Motor neuron (in vitro differentiated cells): ENCODE measurements at regions of chr13 and their contacts with region 1.

Region 1: DNA sequence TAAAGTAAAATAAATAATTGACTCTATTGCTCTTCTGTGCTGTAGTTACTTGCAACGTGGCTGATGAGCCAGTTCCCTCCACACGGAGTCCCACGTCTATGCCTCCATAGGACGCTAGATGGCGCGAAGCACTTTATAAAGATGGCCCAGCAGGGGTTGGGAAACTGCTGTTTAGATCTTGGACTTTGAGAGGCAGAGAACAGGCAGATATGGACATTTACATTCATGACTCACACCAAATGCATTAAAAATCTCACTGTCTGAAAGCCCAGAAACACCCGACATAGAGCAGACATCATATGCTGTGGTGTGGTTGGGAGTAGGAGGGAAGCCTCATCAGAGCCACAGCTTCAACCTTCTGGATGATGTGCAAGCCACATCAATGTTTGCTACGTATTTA is 643.1 kb upstream of the ARGLU1 start:
- ATAC-seq: peak; percentile 98 to 99 (median 99)
- H3K4me3 ChIP-seq: peak overlapping the region in 1 of 5 donors; percentile 8
- H3K27ac ChIP-seq: no peak overlapping the region
- H3K4me1 ChIP-seq: peaks cover 3 to 5% of the 10 kb centered on the region in 2 donors

Region 2: GRCh38 chr13:107271227-107271626 is 60.2 kb after region 1 on chr13:
- in situ Hi-C with region 1: loop called in 1 of 9 experiments (anchors 10 kb)
- ATAC-seq: peak in 3 of 8 experiments; percentile 48 to 79 (median 53)
- H3K4me3 ChIP-seq: no peak overlapping the region
- H3K27ac ChIP-seq: no peak overlapping the region
- H3K4me1 ChIP-seq: no peaks in the 10 kb centered on the region

Region 3: GRCh38 chr13:107642831-107643230 is 431.8 kb after region 1 on chr13:
- in situ Hi-C with region 1: loop called in 1 of 9 experiments (anchors 25 kb)
- ATAC-seq: peak in 1 of 8 experiments; percentile 46
- H3K4me3 ChIP-seq: no peak overlapping the region
- H3K27ac ChIP-seq: no peak overlapping the region
- H3K4me1 ChIP-seq: no peaks in the 10 kb centered on the region

Region 4: GRCh38 chr13:107867701-107868661 is 656.9 kb after region 1 on chr13:
- in situ Hi-C with region 1: loop called in 6 of 9 experiments (anchors 10 to 25 kb)
- ATAC-seq: peak; percentile 59 to 77 (median 74)
- H3K4me3 ChIP-seq: peak overlapping the region; percentile 47 to 94 (median 66)
- H3K27ac ChIP-seq: peak overlapping the region; percentile 56 to 62
- H3K4me1 ChIP-seq: peaks cover 0 to 4% of the 10 kb centered on the region in 2 donors

Region 5: GRCh38 chr13:108155185-108156106 is 944.4 kb after region 1 on chr13:
- in situ Hi-C with region 1: loop called in 4 of 9 experiments (anchors 25 kb)
- ATAC-seq: peak in 1 of 8 experiments; percentile 59
- H3K4me3 ChIP-seq: no peak overlapping the region
- H3K27ac ChIP-seq: no peak overlapping the region
- H3K4me1 ChIP-seq: no peaks in the 10 kb centered on the region